Heart left ventricle (tissue), 16 donors: ENCODE measurements at regions of chr9 and their contacts with region 1.

Region 1: GRCh38 chr9:35664531-35665470 is at the start of gene ARHGEF39:
- DNase-seq: peak; percentile 78 to 92 (median 86)
- ATAC-seq: peak; percentile 53 to 89 (median 84)
- H3K4me3 ChIP-seq: peak within 1 kb of the TSS; percentile 37 to 65 (median 56)
- H3K27ac ChIP-seq: peak within 1 kb of the TSS in 11 of 12 donors; percentile 14 to 99 (median 61)
- H3K4me1 ChIP-seq: peaks cover 0 to 50% (median 27%) of the 10 kb centered on the region in 12 donors
- H3K27me3 ChIP-seq: no peaks in the 10 kb centered on the region
- CTCF ChIP-seq: peak in 7 of 12 donors; percentile 7 to 41 (median 17)
- POLR2A ChIP-seq: peak in 1 of 2 donors; percentile 44
- total RNA-seq, gene ARHGEF39: 0.11 to 1.2 (median 0.27) TPM

Region 2: DNA sequence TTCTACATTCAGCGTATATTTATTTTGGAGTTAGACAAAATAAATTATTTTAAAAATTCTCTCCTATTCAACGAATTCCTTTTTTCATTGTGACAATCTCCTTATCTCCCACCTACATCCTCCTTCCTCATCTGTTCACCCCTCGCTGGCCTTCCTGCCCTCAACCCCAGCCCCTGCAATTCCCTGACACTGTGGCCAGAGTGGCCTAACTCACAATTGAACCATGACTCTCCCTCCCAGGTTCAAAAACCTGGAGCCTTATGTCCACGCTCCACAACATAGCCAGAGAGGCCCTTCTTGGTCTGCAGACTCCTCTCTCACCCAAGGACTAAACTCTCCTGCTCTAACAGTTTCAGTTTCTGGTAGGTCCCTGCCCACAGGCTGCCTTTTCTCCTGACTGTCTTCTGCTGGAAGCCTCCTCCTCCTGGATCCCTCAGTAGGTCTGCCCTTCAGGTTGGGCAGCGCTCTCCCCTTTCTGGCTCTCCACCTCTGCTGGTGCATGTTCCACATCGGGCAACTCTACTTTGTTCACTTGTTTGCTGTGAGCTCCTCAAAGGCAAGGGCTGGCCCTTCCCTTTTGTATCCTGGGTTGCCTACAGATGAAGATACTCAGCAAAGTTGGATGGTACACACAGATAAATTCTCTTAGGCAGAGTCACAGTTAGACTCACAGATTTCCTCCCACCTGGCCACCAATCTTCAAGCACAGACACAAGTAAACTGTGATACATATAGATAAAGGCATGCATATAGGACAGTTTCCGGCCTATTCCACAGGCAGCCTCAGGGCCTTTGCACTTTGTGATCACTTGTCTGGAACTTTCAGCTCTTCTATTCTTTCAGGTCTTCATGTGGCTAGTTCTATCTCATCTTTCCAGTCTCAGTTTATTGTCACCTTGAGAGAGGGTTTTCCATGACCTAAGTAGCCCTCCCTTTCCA is 1268.3 kb before region 1 on chr9:
- intact Hi-C with region 1: no loop called
- DNase-seq: no peak
- ATAC-seq: no peak
- H3K4me3 ChIP-seq: no peak overlapping the region
- H3K27ac ChIP-seq: no peak overlapping the region
- H3K4me1 ChIP-seq: peaks cover 0 to 8% (median 0%) of the 10 kb centered on the region in 12 donors
- H3K27me3 ChIP-seq: no peaks in the 10 kb centered on the region
- CTCF ChIP-seq: no peak
- POLR2A ChIP-seq: no peak

Region 3: DNA sequence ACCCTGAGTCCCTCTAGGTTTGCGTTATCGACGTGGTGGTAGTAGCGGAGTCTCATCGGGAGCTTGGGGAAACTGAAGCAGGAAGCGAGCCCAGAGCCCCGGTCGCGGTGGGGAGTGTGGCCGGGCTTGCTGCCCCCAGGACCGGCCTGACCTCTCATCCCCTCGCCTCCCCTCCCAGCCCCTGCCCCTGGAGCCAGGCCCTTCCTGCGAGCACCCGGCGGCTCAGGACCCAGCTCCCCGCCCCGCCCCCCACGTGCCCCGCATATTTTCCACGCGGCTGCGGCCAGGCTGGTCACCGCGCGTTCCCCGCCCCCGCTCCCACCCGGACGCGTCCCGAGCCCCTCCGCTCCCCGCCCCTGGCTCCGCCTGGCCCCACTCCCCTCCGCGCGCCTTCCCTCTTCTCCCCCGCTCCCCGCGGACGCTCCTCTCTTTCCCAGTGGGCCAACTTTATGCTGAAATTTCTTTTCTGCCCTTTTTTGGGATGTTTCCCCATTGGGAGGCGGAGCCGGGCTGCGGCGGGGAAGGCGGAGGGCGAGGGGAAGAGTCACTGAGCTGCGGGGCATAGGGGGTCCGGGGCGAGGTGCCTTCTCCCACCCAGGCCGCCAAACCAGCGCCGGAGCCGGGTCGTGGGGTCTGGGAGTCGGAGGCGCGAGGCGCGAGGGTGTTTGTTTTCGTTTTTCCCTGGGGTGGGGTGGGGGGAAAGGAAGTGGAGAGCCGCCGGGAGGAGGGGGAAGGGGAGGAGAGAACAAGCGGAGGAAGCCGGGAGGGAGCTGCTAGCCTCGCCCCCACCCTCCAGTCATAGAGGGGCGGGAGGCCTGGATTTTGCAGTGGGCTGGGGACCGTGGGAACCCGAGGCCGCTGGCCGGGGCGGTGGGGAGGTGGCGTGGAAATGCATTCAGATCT is 25.9 kb after region 1 on chr9:
- intact Hi-C with region 1: loop called in 4 of 10 experiments (anchors 2 to 5 kb)
- DNase-seq: peak; percentile 87 to 89 (median 89)
- ATAC-seq: peak; percentile 23 to 65 (median 60)
- H3K4me3 ChIP-seq: peak overlapping the region; percentile 61 to 93 (median 74)
- H3K27ac ChIP-seq: peak overlapping the region; percentile 88 to 98 (median 97)
- H3K4me1 ChIP-seq: peaks cover 2 to 44% (median 26%) of the 10 kb centered on the region in 12 donors
- H3K27me3 ChIP-seq: no peaks in the 10 kb centered on the region
- CTCF ChIP-seq: no peak
- POLR2A ChIP-seq: peak in 1 of 2 donors; percentile 34

Region 4: DNA sequence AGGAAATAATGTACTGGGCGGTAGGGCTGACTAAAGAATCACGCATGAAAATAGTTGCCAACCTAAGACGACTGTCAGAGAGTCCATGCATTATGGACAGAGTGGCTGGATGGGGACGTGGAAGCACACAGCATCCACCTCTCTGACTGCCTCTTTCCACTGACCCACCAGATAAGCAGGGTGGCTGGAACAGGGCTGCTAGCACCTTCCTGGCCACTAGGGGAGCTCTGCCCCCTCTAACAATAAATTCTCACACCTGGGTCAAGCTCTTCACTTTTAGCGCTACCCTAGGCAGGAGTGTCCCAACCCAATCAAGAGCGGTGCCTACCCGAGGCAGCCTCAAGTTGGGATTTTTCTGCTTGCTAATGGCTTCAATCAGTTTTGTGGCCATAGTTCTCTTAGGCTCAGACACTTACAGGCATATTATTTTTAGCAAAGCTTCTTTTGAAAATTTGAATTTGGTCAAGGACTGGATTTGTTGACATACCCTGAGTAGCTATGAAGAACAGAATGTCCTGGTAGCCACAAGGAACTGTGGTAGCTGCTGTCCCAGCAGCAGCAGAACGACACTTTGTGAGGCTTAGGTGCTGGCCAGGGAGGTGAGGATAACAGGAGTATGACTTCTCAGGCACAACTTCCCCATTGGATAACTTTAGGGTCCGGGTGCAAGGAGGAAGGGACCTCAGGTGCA is 31.9 kb after region 1 on chr9:
- intact Hi-C with region 1: loop called in 2 of 10 experiments (anchors 5 kb)
- DNase-seq: peak in 4 of 5 donors; percentile 44 to 59 (median 54)
- ATAC-seq: peak; percentile 49 to 75 (median 73)
- H3K4me3 ChIP-seq: no peak overlapping the region
- H3K27ac ChIP-seq: peak overlapping the region in 4 of 12 donors; percentile 14 to 98 (median 24)
- H3K4me1 ChIP-seq: peaks cover 0 to 13% (median 5%) of the 10 kb centered on the region in 12 donors
- H3K27me3 ChIP-seq: no peaks in the 10 kb centered on the region
- CTCF ChIP-seq: peak; percentile 82 to 94 (median 88)
- POLR2A ChIP-seq: no peak

Region 5: DNA sequence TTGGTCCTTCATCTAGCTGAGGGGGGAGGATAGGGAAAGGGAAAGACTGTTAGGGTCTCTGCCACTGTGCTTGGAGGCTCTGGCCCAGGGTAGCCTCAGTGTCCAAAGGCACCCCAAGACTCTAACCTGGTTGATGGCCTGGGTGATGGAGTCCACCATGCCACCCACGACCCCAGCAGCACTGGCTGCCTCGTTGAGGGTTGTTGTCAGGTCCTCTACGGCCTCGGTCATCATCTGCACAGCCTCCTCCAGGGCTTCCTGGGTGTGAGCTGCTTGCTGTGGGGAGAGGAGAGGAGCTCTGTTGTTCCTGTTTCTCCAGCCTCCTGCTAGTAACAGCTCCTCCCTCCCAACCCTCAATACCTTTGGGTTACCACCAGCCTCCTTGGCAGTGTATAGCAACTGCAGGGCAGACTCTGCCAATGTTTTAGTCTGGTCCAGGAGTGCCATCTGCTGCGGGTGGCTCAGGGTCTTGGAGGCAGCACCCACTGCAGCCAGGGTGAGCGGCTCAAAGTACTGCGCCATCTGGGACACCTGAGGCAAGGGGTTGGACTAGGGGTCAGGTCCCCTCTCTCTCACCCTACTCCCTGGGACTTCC is 41.1 kb after region 1 on chr9:
- intact Hi-C with region 1: loop called in 1 of 10 experiments (anchors 5 kb)
- DNase-seq: peak in 2 of 5 donors; percentile 14 to 18
- ATAC-seq: no peak
- H3K4me3 ChIP-seq: no peak overlapping the region
- H3K27ac ChIP-seq: peak overlapping the region in 1 of 12 donors; percentile 21
- H3K4me1 ChIP-seq: peaks cover 0 to 16% (median under 1%) of the 10 kb centered on the region in 12 donors
- H3K27me3 ChIP-seq: no peaks in the 10 kb centered on the region
- CTCF ChIP-seq: no peak
- POLR2A ChIP-seq: no peak

Region 6: GRCh38 chr9:35748858-35749514 is 84.2 kb after region 1 on chr9 and contains the starts of genes GBA2 and RGP1:
- intact Hi-C with region 1: loop called in 1 of 10 experiments (anchors 5 kb)
- DNase-seq: peak; percentile 88 to 94 (median 93)
- ATAC-seq: peak; percentile 81 to 94 (median 92)
- H3K4me3 ChIP-seq: peak within 1 kb of the TSS; percentile 71 to 99 (median 88)
- H3K27ac ChIP-seq: peak within 1 kb of the TSS; percentile 92 to 99 (median 97)
- H3K4me1 ChIP-seq: peaks cover 2 to 60% (median 49%) of the 10 kb centered on the region in 12 donors
- H3K27me3 ChIP-seq: no peaks in the 10 kb centered on the region
- CTCF ChIP-seq: no peak
- POLR2A ChIP-seq: peak; percentile 19 to 87
- total RNA-seq, gene GBA2: 52.1 to 93.8 (median 65.5) TPM
- total RNA-seq, gene RGP1: 25.4 to 38.8 (median 32.7) TPM